Activated CD4-positive, alpha-beta T cell treated with anti-CD3 and anti-CD28 coated beads, Interleukin-2, amount 10 ng/mL, durations not matched to agents 24 days and 14 days (primary cell): ENCODE measurements at regions of chr17 and their contacts with region 1.

Region 1: GRCh38 chr17:2949469-2950044 is 113.8 kb downstream of the OR1D5 start:
- DNase-seq: no peak
- H3K4me3 Mint-ChIP-seq: no peak overlapping the region
- H3K27ac Mint-ChIP-seq: no peak overlapping the region
- H3K4me1 Mint-ChIP-seq: no peaks in the 10 kb centered on the region
- H3K27me3 Mint-ChIP-seq: peaks cover 8% of the 10 kb centered on the region

Region 2: DNA sequence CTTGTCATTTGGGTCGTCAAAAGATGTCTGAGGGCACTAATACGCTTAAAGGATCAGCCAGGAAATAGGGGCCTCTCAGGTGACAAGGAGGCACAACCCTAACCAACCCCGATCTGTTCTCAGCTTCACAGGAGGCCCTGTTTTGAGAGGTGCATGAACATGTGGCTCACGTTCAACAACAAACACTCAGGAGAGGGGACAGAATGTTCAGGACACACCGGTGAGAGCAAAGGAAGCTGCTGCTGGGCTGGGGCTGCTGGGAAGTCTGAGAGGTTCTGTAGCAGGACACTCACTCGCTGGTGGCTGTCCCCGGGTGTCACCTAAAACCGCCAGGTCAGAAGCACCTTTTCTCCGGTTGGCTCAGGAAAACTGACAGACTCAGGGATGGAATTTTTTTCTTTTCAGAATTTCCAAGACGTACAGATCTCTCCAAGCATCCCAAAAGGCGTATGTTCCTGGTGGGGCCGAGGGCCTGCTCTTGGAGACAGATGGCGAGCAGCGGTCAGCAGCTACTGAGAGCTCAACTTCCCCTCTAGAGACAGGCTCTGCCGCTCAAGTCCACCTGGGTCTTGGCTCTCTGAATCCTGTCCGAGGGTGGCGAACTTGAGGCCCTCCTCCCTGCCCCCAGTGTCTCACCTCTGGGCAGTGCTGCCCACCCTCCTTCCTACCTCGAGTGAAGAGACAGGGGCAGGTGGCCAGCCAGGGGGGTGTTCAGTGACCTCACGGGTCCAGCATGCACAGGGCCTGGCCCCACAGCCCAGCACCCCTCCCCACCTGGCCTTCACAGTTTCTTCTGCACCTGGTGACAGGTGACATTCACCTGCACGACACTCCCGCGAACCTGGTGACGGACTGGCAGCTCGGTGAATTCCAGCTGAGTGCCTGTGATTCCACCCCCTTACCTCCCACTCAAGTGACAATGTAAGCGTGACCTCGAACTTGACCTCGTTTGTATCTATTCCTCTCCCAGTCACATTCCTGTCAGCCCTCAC is 260.9 kb before region 1 on chr17:
- intact Hi-C with region 1: no loop called
- DNase-seq: peak; percentile 59
- H3K4me3 Mint-ChIP-seq: no peak overlapping the region
- H3K27ac Mint-ChIP-seq: peak overlapping the region; percentile 37
- H3K4me1 Mint-ChIP-seq: no peaks in the 10 kb centered on the region
- H3K27me3 Mint-ChIP-seq: no peaks in the 10 kb centered on the region

Region 3: GRCh38 chr17:3004133-3004801 is 54.7 kb after region 1 on chr17:
- intact Hi-C with region 1: loop called (anchors 10 kb)
- DNase-seq: no peak
- H3K4me3 Mint-ChIP-seq: no peak overlapping the region
- H3K27ac Mint-ChIP-seq: no peak overlapping the region
- H3K4me1 Mint-ChIP-seq: no peaks in the 10 kb centered on the region
- H3K27me3 Mint-ChIP-seq: no peaks in the 10 kb centered on the region